Calu3 (cell line): ENCODE measurements at regions of chr3 and their contacts with region 1.

Region 1: GRCh38 chr3:98573181-98573728 is 20.2 kb downstream of the CPOX start:
- DNase-seq: no peak
- H3K4me3 Mint-ChIP-seq: no peak overlapping the region
- H3K27ac Mint-ChIP-seq: no peak overlapping the region
- H3K4me1 Mint-ChIP-seq: peaks cover 13% of the 10 kb centered on the region
- H3K27me3 Mint-ChIP-seq: no peaks in the 10 kb centered on the region
- CTCF ChIP-seq: no peak

Region 2: DNA sequence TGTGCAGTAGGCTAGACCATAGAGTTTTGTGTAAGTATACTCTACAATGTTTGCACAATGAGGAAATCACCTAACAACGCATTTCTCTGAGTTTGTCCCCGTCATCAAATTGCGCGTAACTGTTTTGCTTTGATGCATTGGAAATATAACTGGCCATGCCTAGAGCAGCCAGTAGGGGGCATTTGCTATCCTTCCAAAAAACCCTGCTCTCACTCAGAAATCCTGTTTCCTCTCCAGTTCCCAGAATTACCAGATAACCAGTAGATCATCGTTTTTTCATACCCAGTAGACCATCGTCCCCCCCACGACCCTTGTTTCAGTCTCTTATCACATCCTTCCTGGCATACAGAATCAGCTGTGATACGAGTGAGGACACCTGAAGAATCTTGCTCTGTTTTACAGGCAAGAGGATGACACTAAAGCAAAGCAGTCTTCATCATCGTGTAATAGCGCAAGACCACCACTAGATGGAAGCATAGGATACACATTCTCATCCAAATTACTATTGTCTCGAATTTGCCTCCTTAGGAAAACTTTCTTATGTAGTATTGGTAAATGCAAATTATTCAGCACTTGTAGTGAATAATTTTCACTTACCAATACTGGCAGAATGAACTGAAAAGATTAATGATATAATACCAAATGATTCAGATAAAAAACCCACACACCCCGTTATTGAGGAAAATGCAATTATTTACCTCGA is 533.8 kb before region 1 on chr3:
- CTCF ChIA-PET with region 1: no interaction called
- intact Hi-C with region 1: loop called (anchors 2 kb)
- DNase-seq: peak; percentile 65
- H3K4me3 Mint-ChIP-seq: peak overlapping the region; percentile 71
- H3K27ac Mint-ChIP-seq: no peak overlapping the region
- H3K4me1 Mint-ChIP-seq: no peaks in the 10 kb centered on the region
- H3K27me3 Mint-ChIP-seq: peaks cover 9% of the 10 kb centered on the region
- CTCF ChIP-seq: peak; percentile 69

Region 3: DNA sequence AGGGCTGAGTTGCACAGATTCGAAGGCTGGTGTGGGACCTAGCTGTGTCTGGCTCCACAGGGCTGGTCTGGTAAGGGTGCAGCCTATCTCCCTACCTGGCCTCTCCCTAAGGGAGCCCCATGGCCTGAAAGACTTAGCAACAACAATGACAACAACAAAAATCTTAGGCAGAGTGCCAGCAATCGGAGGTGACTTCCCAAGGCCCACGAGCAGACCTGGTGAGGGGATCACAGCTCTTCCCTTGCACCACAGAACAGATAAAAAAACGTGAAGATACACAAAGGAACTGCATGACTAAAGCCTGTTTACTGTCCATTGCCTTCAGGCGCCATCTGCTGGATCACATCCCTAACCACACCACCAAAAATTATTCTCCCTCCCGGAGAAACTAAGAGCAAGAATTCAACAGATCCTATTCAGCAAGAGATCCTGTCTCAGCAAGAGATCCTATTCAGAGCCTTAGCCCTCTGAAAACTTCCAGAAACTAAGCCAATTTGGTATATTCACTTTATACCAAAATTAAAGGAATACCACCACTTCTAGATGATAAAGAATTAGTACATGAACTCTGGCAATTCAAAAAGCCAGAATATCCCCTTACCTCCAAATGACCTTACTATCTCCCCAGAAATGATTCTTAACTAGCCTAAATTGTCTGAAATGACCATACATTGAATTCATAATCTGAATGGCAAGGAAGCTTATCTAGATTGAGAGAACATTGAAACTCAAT is 243.7 kb before region 1 on chr3:
- CTCF ChIA-PET with region 1: no interaction called
- intact Hi-C with region 1: loop called (anchors 1 kb)
- DNase-seq: peak; percentile 46
- H3K4me3 Mint-ChIP-seq: no peak overlapping the region
- H3K27ac Mint-ChIP-seq: no peak overlapping the region
- H3K4me1 Mint-ChIP-seq: peaks cover 12% of the 10 kb centered on the region
- H3K27me3 Mint-ChIP-seq: peaks cover 45% of the 10 kb centered on the region
- CTCF ChIP-seq: peak; percentile 47

Region 4: DNA sequence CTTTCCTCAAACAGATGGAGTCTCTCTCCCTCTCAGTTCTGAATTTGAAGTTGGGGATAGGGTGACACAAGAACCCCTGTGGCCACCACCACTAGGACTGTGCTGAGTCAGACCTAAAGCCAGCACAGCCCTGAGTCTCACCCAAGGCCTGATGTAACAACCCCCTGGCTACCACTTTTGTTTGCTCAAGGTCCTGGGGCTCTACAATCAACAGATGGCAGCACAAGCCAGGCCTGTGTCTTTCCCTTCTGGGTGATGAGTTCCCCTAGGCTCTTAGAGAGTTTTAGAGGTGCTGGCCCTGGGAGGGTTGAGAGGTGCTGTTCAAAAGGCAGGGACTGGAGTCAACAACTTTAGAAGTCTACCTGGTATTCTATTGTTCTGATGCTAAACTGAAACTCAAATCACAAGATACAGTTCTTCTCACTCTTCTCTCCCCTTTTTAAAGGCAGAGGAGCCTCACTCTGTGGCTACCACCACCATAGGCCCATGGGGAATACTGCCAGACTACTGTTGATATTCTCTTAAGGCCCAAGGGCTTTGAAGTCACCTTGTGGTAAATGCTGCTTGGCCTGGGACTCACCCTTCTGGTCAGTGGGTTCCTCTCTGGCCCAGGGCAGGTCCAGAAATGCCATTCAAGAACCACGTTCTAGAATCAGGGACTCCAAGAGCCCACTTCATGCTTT is 213.1 kb before region 1 on chr3:
- CTCF ChIA-PET with region 1: no interaction called
- intact Hi-C with region 1: loop called (anchors 1 kb)
- DNase-seq: peak; percentile 52
- H3K4me3 Mint-ChIP-seq: no peak overlapping the region
- H3K27ac Mint-ChIP-seq: no peak overlapping the region
- H3K4me1 Mint-ChIP-seq: peaks cover 8% of the 10 kb centered on the region
- H3K27me3 Mint-ChIP-seq: no peaks in the 10 kb centered on the region
- CTCF ChIP-seq: no peak

Region 5: DNA sequence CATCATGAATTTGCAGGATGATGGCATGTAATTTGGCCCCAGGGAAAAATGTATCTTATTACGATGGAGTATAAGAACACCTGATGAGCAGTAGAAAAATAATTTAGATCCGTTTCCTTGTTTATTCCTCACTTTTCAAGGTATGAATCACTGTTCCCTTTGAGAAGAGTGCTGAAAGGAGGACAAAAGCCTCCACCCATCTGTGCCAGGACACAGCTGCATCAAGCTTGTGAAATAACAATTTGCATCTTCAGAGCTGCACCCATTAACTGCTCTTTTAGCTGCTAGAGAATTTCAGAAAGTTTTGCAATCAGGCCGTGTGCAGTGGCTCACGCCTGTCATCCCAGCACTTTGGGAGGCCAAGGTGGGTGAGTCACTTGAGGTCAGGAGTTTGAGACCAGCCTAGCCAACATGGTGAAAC is 60.2 kb before region 1 on chr3:
- CTCF ChIA-PET with region 1: no interaction called
- intact Hi-C with region 1: loop called (anchors 2 kb)
- DNase-seq: peak; percentile 10
- H3K4me3 Mint-ChIP-seq: no peak overlapping the region
- H3K27ac Mint-ChIP-seq: no peak overlapping the region
- H3K4me1 Mint-ChIP-seq: no peaks in the 10 kb centered on the region
- H3K27me3 Mint-ChIP-seq: no peaks in the 10 kb centered on the region
- CTCF ChIP-seq: no peak

Region 6: GRCh38 chr3:98733053-98733539 is 159.8 kb after region 1 on chr3:
- CTCF ChIA-PET with region 1: no interaction called
- intact Hi-C with region 1: no loop called
- DNase-seq: peak; percentile 35
- H3K4me3 Mint-ChIP-seq: peak overlapping the region; percentile 89
- H3K27ac Mint-ChIP-seq: no peak overlapping the region
- H3K4me1 Mint-ChIP-seq: peaks cover 7% of the 10 kb centered on the region
- H3K27me3 Mint-ChIP-seq: peaks cover 15% of the 10 kb centered on the region
- CTCF ChIP-seq: no peak